ENCODE measurements at regions of chr1 and their contacts with region 1.

Region 1: GRCh38 chr1:209989525-209989924 is 51.5 kb downstream of the SYT14 start:
- DNase-seq: peak; percentile 4 to 9
- ATAC-seq: peak in 1 of 2 experiments; percentile 78; a peak in 3 of 6 replicates
- H3K4me3 ChIP-seq: no peak overlapping the region
- H3K27ac ChIP-seq: no peak overlapping the region
- H3K4me1 ChIP-seq: no peaks in the 10 kb centered on the region
- CTCF ChIP-seq: peak; percentile 32; the same call in 2 of the 3 replicates
- EP300 ChIP-seq: no peak
- POLR2A ChIP-seq: no peak
- RAD21 ChIP-seq: peak; percentile 53 to 78

Region 2: DNA sequence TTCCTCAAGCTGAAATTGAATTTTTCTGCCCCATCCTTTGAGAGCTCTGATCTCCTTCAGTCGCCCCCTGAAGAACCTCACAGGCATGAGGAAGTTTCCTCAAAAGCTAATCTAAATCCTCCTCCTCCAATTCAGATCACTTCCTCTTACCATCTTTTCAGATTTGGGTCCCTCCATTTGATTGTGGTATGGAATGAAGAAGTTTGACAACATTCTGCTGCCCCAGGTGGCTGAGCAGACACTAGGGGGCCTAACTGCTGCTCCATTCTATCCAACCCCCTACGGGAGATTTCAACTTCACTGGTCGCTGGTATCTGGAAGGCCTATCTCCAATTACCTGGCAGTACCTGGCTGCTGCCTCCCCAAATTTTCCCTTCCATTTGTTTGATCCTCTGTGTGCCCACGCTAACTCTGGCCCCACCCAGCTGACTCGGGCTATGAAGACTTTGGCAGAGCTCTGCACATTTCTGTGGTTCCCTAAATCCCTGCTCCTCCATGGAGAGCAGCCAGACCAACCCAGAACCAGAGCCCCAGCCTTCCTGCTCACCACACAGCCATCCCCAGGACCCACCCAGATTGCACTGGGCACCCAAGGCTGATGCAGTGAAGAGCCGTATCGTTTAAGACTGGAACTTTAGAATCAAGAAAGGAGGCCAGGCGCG is 191.4 kb before region 1 on chr1:
- CTCF ChIA-PET with region 1: no interaction called
- POLR2A ChIA-PET with region 1: no interaction called
- DNase-seq: no peak
- ATAC-seq: peak in 1 of 2 experiments; percentile 63; a peak in 4 of 6 replicates
- H3K4me3 ChIP-seq: no peak overlapping the region
- H3K27ac ChIP-seq: no peak overlapping the region
- H3K4me1 ChIP-seq: no peaks in the 10 kb centered on the region
- CTCF ChIP-seq: no peak
- EP300 ChIP-seq: no peak
- POLR2A ChIP-seq: no peak
- RAD21 ChIP-seq: no peak

Region 3: DNA sequence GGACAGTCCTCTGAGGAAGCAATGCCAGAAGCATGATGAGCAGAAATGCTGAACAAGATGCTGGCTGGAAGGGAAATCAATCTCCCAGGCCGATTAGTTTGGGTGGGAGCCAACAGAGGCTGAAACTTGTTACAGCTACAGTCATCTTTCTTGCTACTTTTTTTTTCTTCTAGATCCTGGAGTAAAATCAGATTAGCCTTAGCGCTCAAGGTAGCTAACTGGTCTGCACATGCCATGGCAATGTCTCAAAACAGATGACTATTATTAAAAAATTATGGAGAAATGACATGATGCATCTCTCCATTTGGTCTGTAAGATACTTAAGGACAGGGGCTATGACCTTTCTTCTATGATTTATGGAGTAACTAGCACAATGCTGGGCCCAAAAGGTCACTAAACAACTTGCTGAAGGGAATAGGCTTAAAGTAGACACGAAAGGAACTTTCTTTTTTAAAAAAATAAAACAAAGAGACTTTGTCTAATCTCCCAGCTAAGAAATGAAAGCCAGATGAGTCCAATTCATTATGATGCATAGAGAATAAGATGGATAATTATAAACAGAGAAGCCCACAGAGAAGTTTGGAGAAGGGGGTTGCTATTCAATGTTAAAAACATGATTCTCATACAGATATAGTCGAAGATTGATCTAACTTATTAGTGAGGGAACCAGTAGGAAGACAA is 119.2 kb before region 1 on chr1:
- CTCF ChIA-PET with region 1: interaction called, 235 read pairs
- POLR2A ChIA-PET with region 1: no interaction called
- DNase-seq: no peak
- ATAC-seq: no peak
- H3K4me3 ChIP-seq: no peak overlapping the region
- H3K27ac ChIP-seq: no peak overlapping the region
- H3K4me1 ChIP-seq: no peaks in the 10 kb centered on the region
- CTCF ChIP-seq: no peak
- EP300 ChIP-seq: no peak
- POLR2A ChIP-seq: no peak
- RAD21 ChIP-seq: no peak

Region 4: DNA sequence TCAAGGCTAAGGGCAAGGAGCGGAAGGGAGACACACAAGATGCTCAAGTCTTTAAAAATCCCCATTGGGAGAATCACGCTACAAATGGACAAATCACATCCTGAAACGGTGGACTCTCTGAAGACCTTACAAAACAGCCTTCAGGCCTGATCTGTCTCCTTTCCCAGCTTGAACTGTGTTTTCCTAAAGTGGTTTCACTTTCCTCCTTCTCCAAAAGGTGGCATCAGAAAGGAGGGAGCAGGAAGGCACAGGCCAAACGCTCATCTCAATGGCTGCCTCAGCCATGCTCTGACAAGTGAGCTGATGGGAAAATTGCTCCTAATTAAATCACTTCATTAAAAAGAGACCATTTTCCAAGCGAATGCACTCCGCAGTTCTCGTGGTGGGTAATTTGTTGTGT is 114.0 kb before region 1 on chr1:
- CTCF ChIA-PET with region 1: interaction called, 21 read pairs
- POLR2A ChIA-PET with region 1: no interaction called
- DNase-seq: peak; percentile 33 to 52
- ATAC-seq: peak; percentile 87 to 95
- H3K4me3 ChIP-seq: no peak overlapping the region
- H3K27ac ChIP-seq: no peak overlapping the region
- H3K4me1 ChIP-seq: 0 out of 3 replicates have a peak, but pooled peaks cover 2% of the 10 kb centered on the region
- CTCF ChIP-seq: peak; percentile 44
- EP300 ChIP-seq: no peak
- POLR2A ChIP-seq: no peak
- RAD21 ChIP-seq: peak; percentile 34 to 42; a peak in 4 of 5 replicates

Region 5: GRCh38 chr1:209883341-209883971 is 106.1 kb before region 1 on chr1:
- CTCF ChIA-PET with region 1: interaction called, 15 read pairs
- POLR2A ChIA-PET with region 1: no interaction called
- DNase-seq: no peak
- ATAC-seq: no peak; a peak in 1 of 6 replicates
- H3K4me3 ChIP-seq: no peak overlapping the region
- H3K27ac ChIP-seq: peak overlapping the region in 1 of 2 experiments; percentile 36; a peak in 3 of 6 replicates
- H3K4me1 ChIP-seq: peaks cover 19% of the 10 kb centered on the region
- CTCF ChIP-seq: no peak
- EP300 ChIP-seq: no peak
- POLR2A ChIP-seq: no peak
- RAD21 ChIP-seq: no peak